ENCODE measurements at regions of chr19 and their contacts with region 1.

Region 1: GRCh38 chr19:36169084-36169760 is 17.0 kb upstream of the COX7A1 start:
- DNase-seq: no peak
- ATAC-seq: no peak
- H3K4me3 ChIP-seq: no peak overlapping the region
- H3K27ac ChIP-seq: no peak overlapping the region
- H3K4me1 ChIP-seq: no peaks in the 10 kb centered on the region; a peak in 2 of 5 replicates
- H3K27me3 ChIP-seq: no peaks in the 10 kb centered on the region
- CTCF ChIP-seq: no peak
- EP300 ChIP-seq: no peak
- POLR2A ChIP-seq: no peak
- RAD21 ChIP-seq: no peak

Region 2: DNA sequence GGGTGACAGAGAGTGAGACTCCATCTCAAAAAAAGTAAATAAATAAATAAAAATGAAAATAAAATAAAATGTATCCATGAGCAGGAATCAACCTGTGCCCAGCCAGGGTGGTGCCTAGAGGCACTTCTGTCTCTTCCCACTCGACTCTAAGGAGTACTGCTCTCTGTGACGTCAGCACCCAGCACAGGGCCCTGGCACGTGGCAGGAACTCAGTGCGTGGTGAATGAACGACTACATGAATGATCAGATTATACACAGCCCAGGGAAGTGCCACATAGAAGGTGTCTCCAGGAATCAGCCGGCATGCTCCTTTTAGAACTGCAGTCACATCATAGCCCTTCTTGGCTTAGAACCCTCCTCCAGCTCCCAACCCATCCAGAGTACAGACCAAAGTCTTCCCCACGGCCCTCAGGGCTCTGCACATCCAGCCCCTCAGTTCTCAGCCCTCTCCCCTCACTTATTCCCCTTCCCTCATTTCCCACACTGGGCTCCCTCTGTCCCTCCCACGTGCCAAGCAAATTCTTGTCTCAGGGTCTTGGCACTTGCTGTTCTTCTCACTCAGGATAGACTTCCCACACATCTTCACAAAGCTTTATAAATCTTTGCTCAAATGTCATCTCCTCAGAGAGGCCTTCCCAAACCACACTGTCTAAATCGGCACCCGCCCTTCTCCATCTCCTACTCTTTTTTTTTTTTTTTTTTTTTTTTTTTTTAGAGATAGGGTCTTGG is 140.7 kb before region 1 on chr19:
- CTCF ChIA-PET with region 1: no interaction called
- POLR2A ChIA-PET with region 1: no interaction called
- in situ Hi-C with region 1: no loop called
- intact Hi-C with region 1: no loop called
- DNase-seq: no peak
- ATAC-seq: no peak
- H3K4me3 ChIP-seq: no peak overlapping the region
- H3K27ac ChIP-seq: no peak overlapping the region
- H3K4me1 ChIP-seq: peaks cover 0 to 17% of the 10 kb centered on the region in 2 experiments; a peak in 2 of 5 replicates
- H3K27me3 ChIP-seq: no peaks in the 10 kb centered on the region
- CTCF ChIP-seq: no peak
- EP300 ChIP-seq: no peak
- POLR2A ChIP-seq: no peak
- RAD21 ChIP-seq: no peak

Region 3: DNA sequence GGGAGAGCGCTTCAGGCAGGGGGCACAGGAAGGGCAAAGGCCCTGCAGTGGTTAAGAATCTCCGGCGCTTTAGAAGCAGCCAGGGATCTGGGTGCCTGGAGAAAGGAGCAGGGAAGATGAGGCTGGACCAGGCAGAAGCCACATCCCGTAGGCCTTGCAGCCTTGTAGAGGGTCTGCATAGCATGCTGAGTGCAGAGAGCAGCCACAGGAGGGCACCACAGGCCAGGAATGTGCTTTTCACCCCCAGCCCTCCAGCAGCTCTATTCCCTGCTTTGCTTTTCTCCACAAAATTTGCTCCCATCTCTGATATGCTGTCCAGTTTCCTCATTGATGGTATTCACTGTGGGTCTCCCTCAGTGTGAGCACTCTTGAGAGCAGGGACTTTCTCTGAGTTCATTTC is 108.8 kb before region 1 on chr19:
- CTCF ChIA-PET with region 1: interaction called, 6 read pairs
- POLR2A ChIA-PET with region 1: no interaction called
- in situ Hi-C with region 1: loop called (anchors 5 kb)
- intact Hi-C with region 1: loop called (anchors 5 kb)
- DNase-seq: peak; percentile 42 to 68 (median 47)
- ATAC-seq: peak; percentile 84
- H3K4me3 ChIP-seq: no peak overlapping the region
- H3K27ac ChIP-seq: no peak overlapping the region
- H3K4me1 ChIP-seq: peaks cover 5% of the 10 kb centered on the region in 2 experiments; a peak in 3 of 5 replicates
- H3K27me3 ChIP-seq: no peaks in the 10 kb centered on the region
- CTCF ChIP-seq: peak; percentile 55 to 72 (median 72)
- EP300 ChIP-seq: no peak
- POLR2A ChIP-seq: no peak
- RAD21 ChIP-seq: peak; percentile 50 to 59

Region 4: DNA sequence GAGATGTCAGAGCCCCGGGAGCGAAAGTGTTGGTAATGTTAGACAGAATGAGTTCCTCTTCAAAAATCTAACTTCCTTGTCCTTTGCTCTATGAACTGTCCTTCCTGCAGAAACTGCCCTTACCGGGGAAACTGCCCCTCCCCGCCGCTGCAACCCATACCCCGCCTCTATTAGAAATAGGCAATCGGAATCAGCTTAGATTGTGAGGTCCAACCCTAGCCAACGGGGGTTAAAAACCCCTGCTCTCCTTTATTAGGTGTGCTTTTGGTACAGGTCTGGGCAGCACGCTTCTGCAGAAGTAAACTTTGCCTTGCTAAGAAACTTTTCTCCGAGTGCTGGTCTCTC is 40.9 kb before region 1 on chr19:
- CTCF ChIA-PET with region 1: interaction called, 49 read pairs
- POLR2A ChIA-PET with region 1: interaction called, 3 read pairs
- in situ Hi-C with region 1: loop called (anchors 5 kb)
- intact Hi-C with region 1: loop called (anchors 1 kb)
- DNase-seq: peak in 3 of 4 experiments; percentile 29 to 33 (median 29)
- ATAC-seq: peak; percentile 9
- H3K4me3 ChIP-seq: peak overlapping the region; percentile 46
- H3K27ac ChIP-seq: peak overlapping the region; percentile 64
- H3K4me1 ChIP-seq: peaks cover 0 to 15% of the 10 kb centered on the region in 2 experiments; a peak in 2 of 5 replicates
- H3K27me3 ChIP-seq: no peaks in the 10 kb centered on the region
- CTCF ChIP-seq: no peak
- EP300 ChIP-seq: no peak
- POLR2A ChIP-seq: no peak
- RAD21 ChIP-seq: no peak